ENCODE measurements at regions of chr1 and their contacts with region 1.

Region 1: DNA sequence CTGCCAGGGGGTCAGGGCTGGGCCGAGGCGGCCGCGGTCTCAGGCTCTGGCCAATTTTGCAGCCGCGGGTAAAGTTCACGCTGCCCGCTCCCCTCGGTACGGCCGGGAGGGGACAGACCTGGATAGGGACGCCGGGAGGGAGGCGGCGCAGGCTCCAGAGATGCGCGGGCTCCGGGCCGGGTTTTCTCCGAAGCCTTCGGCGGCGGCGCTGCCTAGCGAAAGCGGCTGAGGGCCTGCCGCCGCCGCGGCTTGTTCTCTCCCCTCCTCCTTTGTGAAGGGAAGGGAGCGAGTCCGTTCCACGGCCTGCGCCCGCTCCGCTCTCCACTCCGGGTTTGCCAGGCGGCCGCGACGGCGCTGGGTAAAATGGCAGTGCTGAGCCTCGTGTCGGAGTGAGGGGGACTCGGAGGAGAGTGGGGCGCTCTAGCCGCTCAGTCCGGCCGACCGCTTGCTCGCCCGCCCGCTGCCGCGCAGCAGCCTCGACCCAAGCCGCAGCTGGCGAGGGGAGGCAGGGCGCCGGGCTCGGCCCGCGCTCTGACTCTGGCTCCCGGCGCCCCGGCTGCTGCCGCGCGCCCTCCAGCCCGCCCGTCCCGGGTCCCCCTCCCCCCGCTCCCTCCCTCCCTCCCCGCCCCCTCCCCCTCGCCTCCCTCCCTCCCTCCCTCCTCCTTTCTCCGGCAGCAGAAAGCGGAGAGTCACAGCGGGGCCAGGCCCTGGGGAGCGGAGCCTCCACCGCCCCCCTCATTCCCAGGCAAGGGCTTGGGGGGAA is at the start of gene ARID1A:
- DNase-seq: peak; percentile 90 to 99 (median 96)
- ATAC-seq: peak; percentile 53 to 60
- H3K4me3 Mint-ChIP-seq: peak within 1 kb of the TSS in 9 of 10 donors; percentile 86 to 98 (median 94)
- H3K27ac Mint-ChIP-seq: peak within 1 kb of the TSS; percentile 76 to 98 (median 96)
- H3K4me1 Mint-ChIP-seq: peaks cover 14 to 35% (median 29%) of the 10 kb centered on the region in 4 donors
- H3K27me3 Mint-ChIP-seq: no peaks in the 10 kb centered on the region
- polyA plus RNA-seq, gene ARID1A: 21.2 to 32.0 (median 28.9) TPM

Region 2: GRCh38 chr1:26555550-26556510 is 139.7 kb before region 1 on chr1:
- POLR2A ChIA-PET with region 1: no interaction called
- DNase-seq: no peak
- ATAC-seq: no peak
- H3K4me3 Mint-ChIP-seq: no peak overlapping the region
- H3K27ac Mint-ChIP-seq: peak overlapping the region in 5 of 10 donors; percentile 15 to 51 (median 32)
- H3K4me1 Mint-ChIP-seq: peaks cover 0 to 16% (median 5%) of the 10 kb centered on the region in 4 donors
- H3K27me3 Mint-ChIP-seq: no peaks in the 10 kb centered on the region

Region 3: DNA sequence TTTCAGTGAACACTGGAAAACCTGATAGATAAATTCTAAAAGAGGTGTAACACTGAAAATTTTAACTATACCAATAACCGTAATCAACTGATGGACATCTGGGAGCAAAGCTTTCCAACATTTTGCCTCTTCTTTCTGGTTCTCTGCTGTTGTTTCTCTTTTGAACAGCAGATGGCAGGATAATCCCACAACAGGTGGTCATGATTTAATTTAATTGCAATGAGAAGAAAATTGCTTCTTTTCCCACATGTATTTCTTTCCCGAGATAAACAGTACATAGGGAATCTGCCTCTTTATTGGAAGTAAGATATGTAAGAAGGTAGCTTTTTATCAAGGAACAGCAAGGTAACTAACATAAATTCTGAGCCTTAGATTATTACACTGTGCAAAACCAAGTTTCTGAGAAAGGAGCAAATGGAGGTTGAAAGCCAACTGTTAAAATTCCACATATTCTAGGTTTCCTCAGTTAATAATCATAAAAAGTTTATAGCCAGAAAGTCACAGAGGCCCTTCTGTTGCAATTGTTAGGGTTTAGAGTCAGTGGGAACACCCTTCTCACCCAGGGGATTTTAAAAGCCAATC is 93.1 kb before region 1 on chr1:
- POLR2A ChIA-PET with region 1: interaction called, 22 read pairs
- DNase-seq: peak in 9 of 10 donors; percentile 18 to 76 (median 62)
- ATAC-seq: peak in 1 of 2 donors; percentile 37
- H3K4me3 Mint-ChIP-seq: no peak overlapping the region
- H3K27ac Mint-ChIP-seq: no peak overlapping the region
- H3K4me1 Mint-ChIP-seq: peaks cover 6 to 15% (median 8%) of the 10 kb centered on the region in 4 donors
- H3K27me3 Mint-ChIP-seq: peaks cover 0 to 2% (median 0%) of the 10 kb centered on the region in 5 donors

Region 4: DNA sequence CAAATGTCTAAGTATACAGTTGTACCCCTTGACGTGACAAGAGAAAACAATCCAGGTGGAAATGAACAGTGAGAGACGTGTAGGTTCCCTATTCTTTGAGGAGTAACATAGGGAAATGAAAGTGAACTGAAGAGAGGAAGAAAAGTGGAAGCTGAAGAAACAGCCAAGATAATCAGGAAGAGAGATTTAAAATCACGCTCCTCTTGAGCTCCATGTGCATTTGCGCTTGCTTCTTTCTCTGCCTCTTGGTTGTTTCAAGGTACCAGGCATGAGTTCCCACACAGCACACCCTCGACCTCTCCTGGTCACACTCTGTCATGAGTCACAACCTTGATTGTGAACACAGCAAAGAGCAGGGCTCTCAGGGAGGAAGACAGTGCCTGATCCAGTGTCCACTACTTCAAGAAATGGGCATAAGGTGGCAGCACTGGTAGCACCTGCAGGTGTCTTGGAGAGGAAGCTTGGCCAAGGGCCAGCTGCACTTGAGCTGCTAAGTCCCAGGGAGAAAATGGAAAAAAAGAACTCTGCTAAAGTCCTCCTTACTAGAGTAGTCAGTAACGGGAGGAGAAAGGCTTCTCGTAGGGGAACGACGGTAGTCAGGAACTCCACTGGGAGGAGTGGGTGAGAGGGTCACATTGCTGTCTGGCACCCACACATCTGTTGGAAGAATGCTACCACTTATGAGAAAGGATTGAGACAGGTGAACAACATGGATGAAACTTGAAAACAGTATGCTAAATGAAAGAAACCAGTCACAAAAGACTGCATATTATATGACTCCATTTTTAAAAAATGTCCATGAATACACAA is 18.0 kb before region 1 on chr1:
- POLR2A ChIA-PET with region 1: interaction called, 18 read pairs
- DNase-seq: peak; percentile 36 to 84 (median 54)
- ATAC-seq: peak; percentile 97 to 99
- H3K4me3 Mint-ChIP-seq: peak overlapping the region; percentile 19 to 81 (median 54)
- H3K27ac Mint-ChIP-seq: peak overlapping the region; percentile 29 to 94 (median 78)
- H3K4me1 Mint-ChIP-seq: peaks cover 6 to 24% (median 19%) of the 10 kb centered on the region in 4 donors
- H3K27me3 Mint-ChIP-seq: no peaks in the 10 kb centered on the region

Region 5: GRCh38 chr1:26705788-26706311 is 10.3 kb after region 1 on chr1:
- POLR2A ChIA-PET with region 1: interaction called, 40 read pairs
- DNase-seq: no peak
- ATAC-seq: peak in 1 of 2 donors; percentile 38
- H3K4me3 Mint-ChIP-seq: peak overlapping the region; percentile 27 to 73 (median 60)
- H3K27ac Mint-ChIP-seq: peak overlapping the region; percentile 20 to 84 (median 73)
- H3K4me1 Mint-ChIP-seq: peaks cover 25 to 47% (median 29%) of the 10 kb centered on the region in 4 donors
- H3K27me3 Mint-ChIP-seq: no peaks in the 10 kb centered on the region

Region 6: GRCh38 chr1:26723013-26723991 is 27.8 kb after region 1 on chr1:
- POLR2A ChIA-PET with region 1: interaction called, 93 read pairs
- DNase-seq: peak; percentile 14 to 71 (median 35)
- ATAC-seq: peak; percentile 62 to 80
- H3K4me3 Mint-ChIP-seq: peak overlapping the region; percentile 61 to 88 (median 78)
- H3K27ac Mint-ChIP-seq: peak overlapping the region; percentile 4 to 93 (median 82)
- H3K4me1 Mint-ChIP-seq: peaks cover 48 to 96% (median 86%) of the 10 kb centered on the region in 4 donors
- H3K27me3 Mint-ChIP-seq: no peaks in the 10 kb centered on the region

Region 7: GRCh38 chr1:26744075-26744959 is 48.8 kb after region 1 on chr1:
- POLR2A ChIA-PET with region 1: interaction called, 67 read pairs
- DNase-seq: peak; percentile 39 to 87 (median 74)
- ATAC-seq: peak; percentile 90 to 94
- H3K4me3 Mint-ChIP-seq: peak overlapping the region; percentile 60 to 86 (median 78)
- H3K27ac Mint-ChIP-seq: peak overlapping the region; percentile 87 to 96 (median 93)
- H3K4me1 Mint-ChIP-seq: peaks cover 43 to 93% (median 83%) of the 10 kb centered on the region in 4 donors
- H3K27me3 Mint-ChIP-seq: no peaks in the 10 kb centered on the region

Region 8: DNA sequence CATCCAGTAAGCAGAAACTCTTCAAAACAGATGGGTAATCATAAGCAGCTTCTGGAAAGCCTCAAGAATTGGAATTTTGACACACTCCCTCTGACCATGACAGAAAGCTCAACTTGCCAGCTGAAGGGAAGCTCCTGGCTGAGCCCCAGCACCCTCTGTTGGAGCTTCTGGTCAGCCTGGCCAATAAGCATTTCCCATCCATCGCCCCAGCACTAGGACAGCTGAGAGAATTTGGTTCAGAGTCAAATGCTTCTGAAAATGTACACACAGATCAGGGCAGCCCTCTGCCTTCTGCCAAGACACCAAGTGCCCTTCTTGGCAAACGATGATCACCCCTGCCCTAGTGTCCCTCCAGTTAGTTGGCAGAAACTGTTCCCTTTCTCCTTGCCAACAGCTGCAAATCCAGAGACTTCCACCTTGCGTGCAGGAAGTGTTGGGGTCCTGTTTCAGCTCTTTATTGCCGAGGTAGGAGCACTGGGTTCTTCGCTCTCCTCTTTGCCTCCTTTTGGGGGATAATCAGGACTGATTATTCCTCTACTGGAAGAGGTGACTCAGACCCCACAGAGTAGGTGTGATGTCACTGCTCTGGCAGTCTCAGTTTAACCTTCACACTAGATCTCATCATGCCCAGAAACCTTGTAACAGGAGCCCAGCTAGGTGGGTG is 104.1 kb after region 1 on chr1:
- POLR2A ChIA-PET with region 1: interaction called, 19 read pairs
- DNase-seq: no peak
- ATAC-seq: peak; percentile 47 to 61
- H3K4me3 Mint-ChIP-seq: peak overlapping the region; percentile 47 to 86 (median 72)
- H3K27ac Mint-ChIP-seq: peak overlapping the region; percentile 90 to 99 (median 96)
- H3K4me1 Mint-ChIP-seq: peaks cover 25 to 40% (median 38%) of the 10 kb centered on the region in 4 donors
- H3K27me3 Mint-ChIP-seq: no peaks in the 10 kb centered on the region